ENCODE measurements at regions of chr19 and their contacts with region 1.

Region 1: GRCh38 chr19:15101479-15102082 is 5.6 kb upstream of the SYDE1 start:
- DNase-seq: peak; percentile 75
- H3K4me3 ChIP-seq: no peak overlapping the region
- H3K27ac ChIP-seq: no peak overlapping the region
- H3K4me1 ChIP-seq: peaks cover 3% of the 10 kb centered on the region
- H3K27me3 ChIP-seq: no peaks in the 10 kb centered on the region
- CTCF ChIP-seq: peak; percentile 79 to 85
- POLR2A ChIP-seq: no peak

Region 2: DNA sequence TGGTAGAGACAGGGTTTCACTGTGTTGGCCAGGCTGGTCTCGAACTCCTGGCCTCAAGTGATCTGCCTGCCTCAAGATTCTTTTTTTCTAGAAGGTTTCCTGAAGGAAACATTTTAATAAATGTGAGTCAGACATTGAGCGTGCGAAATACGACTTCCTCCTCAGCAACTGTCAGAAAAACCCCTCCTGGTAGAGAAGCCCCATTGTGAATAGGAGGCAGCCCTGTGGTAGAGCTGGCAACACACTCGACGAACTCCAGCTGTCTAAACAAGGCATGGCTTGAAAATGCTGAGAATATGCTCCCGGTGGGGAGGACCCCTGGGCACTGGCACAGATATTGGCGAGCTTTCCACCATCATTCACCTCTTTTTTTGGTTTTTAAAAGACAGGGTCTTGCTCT is 401.9 kb before region 1 on chr19:
- CTCF ChIA-PET with region 1: no interaction called
- POLR2A ChIA-PET with region 1: no interaction called
- dilution Hi-C with region 1: no loop called
- intact Hi-C with region 1: no loop called
- DNase-seq: peak; percentile 28
- H3K4me3 ChIP-seq: no peak overlapping the region
- H3K27ac ChIP-seq: no peak overlapping the region
- H3K4me1 ChIP-seq: no peaks in the 10 kb centered on the region
- H3K27me3 ChIP-seq: no peaks in the 10 kb centered on the region
- CTCF ChIP-seq: no peak
- POLR2A ChIP-seq: no peak

Region 3: GRCh38 chr19:15048885-15049572 is 52.6 kb before region 1 on chr19 and contains the start of gene CASP14:
- CTCF ChIA-PET with region 1: no interaction called
- POLR2A ChIA-PET with region 1: no interaction called
- dilution Hi-C with region 1: no loop called
- intact Hi-C with region 1: no loop called
- DNase-seq: no peak
- H3K4me3 ChIP-seq: no peak within 1 kb of the TSS
- H3K27ac ChIP-seq: no peak within 1 kb of the TSS
- H3K4me1 ChIP-seq: no peaks in the 10 kb centered on the region
- H3K27me3 ChIP-seq: no peaks in the 10 kb centered on the region
- CTCF ChIP-seq: no peak
- POLR2A ChIP-seq: no peak
- total RNA-seq, gene CASP14: not detected in 2 replicates

Region 4: GRCh38 chr19:15125232-15126067 is 23.9 kb after region 1 on chr19:
- CTCF ChIA-PET with region 1: interaction called, 30 read pairs
- POLR2A ChIA-PET with region 1: no interaction called
- dilution Hi-C with region 1: no loop called
- intact Hi-C with region 1: no loop called
- DNase-seq: peak; percentile 98
- H3K4me3 ChIP-seq: peak overlapping the region; percentile 49 to 80 (median 55)
- H3K27ac ChIP-seq: peak overlapping the region; percentile 52
- H3K4me1 ChIP-seq: peaks cover 3% of the 10 kb centered on the region
- H3K27me3 ChIP-seq: peaks cover 0 to 3% of the 10 kb centered on the region in 2 experiments
- CTCF ChIP-seq: no peak
- POLR2A ChIP-seq: peak; percentile 25

Region 5: DNA sequence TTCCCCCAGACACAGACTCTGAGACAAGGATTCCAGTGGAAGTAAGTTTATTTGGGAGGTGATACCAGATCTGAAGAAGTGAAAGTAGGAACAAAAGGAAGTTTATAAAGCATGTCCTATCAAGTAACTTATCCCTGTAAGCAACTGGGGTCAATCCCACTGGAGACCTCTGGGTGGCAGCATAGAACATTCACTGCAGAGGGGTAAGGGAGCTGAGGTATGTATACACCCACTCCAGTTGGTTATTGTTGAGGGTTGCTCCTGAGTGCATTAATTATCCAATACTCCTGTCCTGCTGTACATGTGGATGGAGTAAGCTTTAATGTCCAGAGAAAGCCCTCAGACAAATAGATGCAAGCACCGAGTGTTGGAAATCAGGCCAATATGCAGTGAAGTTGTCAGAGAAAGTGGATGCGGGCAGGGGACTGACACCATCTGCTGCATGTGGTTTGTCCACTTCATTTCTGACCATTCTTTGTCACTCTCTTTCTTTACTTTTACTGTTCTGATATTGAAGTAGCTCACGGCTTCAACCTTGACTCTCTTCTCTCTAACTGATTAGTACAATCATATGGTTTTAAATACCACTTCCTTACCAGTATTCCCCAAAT is 52.5 kb after region 1 on chr19:
- CTCF ChIA-PET with region 1: interaction called, 176 read pairs
- POLR2A ChIA-PET with region 1: no interaction called
- dilution Hi-C with region 1: no loop called
- intact Hi-C with region 1: loop called (anchors 1 kb)
- DNase-seq: peak; percentile 52
- H3K4me3 ChIP-seq: no peak overlapping the region
- H3K27ac ChIP-seq: no peak overlapping the region
- H3K4me1 ChIP-seq: no peaks in the 10 kb centered on the region
- H3K27me3 ChIP-seq: peaks cover 0 to 7% of the 10 kb centered on the region in 2 experiments
- CTCF ChIP-seq: peak; percentile 51 to 56
- POLR2A ChIP-seq: no peak

Region 6: DNA sequence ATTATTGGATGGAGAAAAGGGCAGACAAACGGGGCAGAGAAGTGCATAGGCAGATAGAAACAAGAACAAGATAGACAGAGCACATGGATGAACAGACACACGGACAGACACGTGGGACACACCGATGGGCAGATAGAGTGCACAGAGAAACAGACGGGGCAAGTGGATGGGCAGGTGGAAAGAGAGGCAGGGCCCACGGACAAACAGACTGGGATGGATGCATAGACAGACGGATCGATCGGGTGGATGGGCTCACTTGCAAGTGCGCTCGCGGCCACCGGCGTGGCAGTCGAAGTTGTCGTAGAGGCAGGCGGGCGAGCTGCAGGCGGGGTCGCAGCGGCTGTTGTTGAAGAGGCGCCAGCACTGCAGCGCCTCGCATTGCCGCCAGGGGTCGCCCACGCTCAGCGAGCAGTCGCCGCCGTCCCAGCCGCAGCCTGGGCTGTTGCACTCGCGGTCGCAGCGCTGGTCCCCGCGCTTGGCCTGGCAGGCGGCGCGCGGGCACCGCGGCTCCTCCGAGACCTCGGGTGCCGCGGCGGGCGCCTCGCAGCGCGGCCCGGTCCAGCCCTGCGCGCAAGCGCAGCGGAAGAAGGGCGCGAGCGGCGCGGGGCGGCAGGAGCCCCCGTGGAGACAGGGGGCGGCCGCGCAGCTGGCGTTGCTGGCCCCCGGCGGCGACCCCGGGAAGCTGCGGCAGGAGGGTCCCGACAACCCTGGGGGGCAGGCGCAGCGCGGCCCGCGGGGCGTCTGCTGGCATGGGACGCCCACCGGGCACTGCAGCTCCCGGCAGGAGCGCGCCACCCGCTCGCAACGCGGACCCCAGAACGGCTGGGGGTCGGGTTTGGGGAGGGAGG is 75.9 kb after region 1 on chr19:
- CTCF ChIA-PET with region 1: interaction called, 21 read pairs
- POLR2A ChIA-PET with region 1: no interaction called
- dilution Hi-C with region 1: no loop called
- intact Hi-C with region 1: no loop called
- DNase-seq: peak; percentile 78
- H3K4me3 ChIP-seq: peak overlapping the region in 1 of 3 experiments; percentile 13
- H3K27ac ChIP-seq: no peak overlapping the region
- H3K4me1 ChIP-seq: no peaks in the 10 kb centered on the region
- H3K27me3 ChIP-seq: no peaks in the 10 kb centered on the region
- CTCF ChIP-seq: peak; percentile 93 to 97
- POLR2A ChIP-seq: no peak